Heart left ventricle (tissue), 16 donors: ENCODE measurements at regions of chr9 and their contacts with region 1.

Region 1: GRCh38 chr9:126704873-126705766 is 91.4 kb downstream of the LMX1B start:
- DNase-seq: peak; percentile 62 to 89 (median 73)
- ATAC-seq: peak; percentile 43 to 77 (median 69)
- H3K4me3 ChIP-seq: peak overlapping the region in 6 of 12 donors; percentile 3 to 36 (median 16)
- H3K27ac ChIP-seq: no peak overlapping the region
- H3K4me1 ChIP-seq: peaks cover 0 to 21% (median 12%) of the 10 kb centered on the region in 12 donors
- H3K27me3 ChIP-seq: peaks cover 17 to 57% (median 36%) of the 10 kb centered on the region in 9 donors
- CTCF ChIP-seq: peak; percentile 68 to 92 (median 86)
- POLR2A ChIP-seq: no peak

Region 2: DNA sequence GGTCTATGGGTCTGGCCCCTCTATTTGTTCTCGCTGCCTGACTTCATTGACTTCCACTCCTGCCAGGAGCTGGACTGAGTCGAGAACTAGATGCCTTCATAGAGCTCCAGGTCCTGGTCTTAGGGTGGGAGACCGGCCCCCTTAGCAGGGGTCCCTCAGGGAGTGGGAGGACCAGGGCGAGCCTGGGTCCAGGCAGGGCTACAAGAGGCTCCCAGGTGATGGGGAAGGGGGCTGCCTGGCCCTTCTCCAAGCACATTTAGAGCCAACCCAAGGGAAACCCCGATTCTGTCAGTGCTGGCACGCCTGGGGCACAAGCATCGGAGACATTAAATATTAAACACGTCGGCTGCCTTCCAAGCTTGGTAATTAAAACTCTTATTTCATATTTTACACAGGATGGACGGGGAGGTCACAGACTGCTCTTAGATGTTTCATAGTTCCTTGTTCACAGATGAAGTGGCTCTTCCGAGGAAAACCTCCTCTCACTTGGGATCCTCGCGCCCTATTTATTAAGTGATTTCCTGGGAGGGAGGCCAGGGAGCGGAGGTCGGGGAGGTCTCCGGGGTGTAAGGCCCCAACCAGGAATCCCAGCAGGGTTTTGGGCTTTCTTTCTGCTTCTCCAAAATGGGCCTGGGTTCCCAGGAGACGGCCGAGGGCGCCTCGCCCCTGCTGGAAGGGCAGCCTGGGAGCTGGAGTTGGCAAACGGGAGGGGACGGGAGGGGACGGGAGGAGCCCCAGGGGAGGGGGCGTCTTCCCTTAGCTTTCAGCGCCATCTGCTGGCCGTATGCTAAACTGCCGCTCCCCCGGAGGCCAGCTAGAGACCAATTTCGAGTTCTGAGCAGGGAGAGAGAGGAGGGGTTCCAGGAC is 76.3 kb after region 1 on chr9:
- intact Hi-C with region 1: loop called (anchors 1 to 2 kb)
- DNase-seq: peak; percentile 77 to 89 (median 79)
- ATAC-seq: peak; percentile 79 to 86 (median 81)
- H3K4me3 ChIP-seq: peak overlapping the region in 3 of 12 donors; percentile 4 to 26 (median 9)
- H3K27ac ChIP-seq: no peak overlapping the region
- H3K4me1 ChIP-seq: peaks cover 0 to 17% (median 5%) of the 10 kb centered on the region in 12 donors
- H3K27me3 ChIP-seq: peaks cover 0 to 34% (median 3%) of the 10 kb centered on the region in 9 donors
- CTCF ChIP-seq: peak; percentile 89 to 98 (median 95)
- POLR2A ChIP-seq: no peak